ENCODE measurements at regions of chr19 and their contacts with region 1.

Region 1: DNA sequence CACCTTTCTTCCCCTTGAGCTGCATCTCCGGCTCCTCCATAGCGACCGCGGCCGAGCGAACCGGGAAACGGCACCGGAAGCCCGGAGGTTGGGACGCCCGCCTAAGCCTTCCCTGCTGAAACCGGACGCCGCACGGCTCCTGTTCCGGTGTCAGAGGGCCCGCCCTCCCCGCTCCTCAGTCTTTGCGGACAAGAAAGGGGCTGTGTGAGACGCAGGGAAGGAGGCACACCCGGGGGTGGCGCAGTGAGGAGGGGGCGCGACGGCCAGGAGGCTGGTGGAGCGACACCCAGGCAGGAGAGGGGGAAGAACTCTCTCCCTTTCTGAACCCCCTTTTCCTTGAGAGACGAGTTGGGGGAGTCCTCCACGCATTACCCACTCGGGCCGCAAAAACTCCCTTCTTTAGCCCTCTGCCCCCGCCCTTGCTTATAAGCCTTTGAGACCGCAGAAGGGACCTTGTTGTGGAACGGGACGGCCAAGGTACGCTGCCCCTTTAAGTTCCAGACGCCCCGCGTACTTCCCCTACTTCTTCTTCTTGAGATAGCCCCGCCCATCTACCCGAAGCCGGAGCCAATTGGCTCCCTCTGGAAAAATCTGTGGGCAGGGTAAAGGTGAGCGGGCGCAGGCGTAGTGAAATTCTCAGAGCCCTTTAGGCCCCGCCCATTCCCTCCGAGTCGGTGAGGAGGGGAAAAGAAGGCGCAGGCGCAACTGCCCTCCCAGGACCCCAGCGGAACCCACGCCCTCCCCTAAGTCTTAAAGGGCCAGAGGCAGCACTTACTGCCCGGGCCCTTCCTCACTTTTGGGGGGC is at the starts of genes BORCS8 and RFXANK:
- DNase-seq: peak; percentile 97 to 100 (median 98)

Region 2: GRCh38 chr19:18785179-18786128 is 406.8 kb before region 1 on chr19:
- intact Hi-C with region 1: no loop called
- DNase-seq: peak in 2 of 10 donors; percentile 13 to 52

Region 3: DNA sequence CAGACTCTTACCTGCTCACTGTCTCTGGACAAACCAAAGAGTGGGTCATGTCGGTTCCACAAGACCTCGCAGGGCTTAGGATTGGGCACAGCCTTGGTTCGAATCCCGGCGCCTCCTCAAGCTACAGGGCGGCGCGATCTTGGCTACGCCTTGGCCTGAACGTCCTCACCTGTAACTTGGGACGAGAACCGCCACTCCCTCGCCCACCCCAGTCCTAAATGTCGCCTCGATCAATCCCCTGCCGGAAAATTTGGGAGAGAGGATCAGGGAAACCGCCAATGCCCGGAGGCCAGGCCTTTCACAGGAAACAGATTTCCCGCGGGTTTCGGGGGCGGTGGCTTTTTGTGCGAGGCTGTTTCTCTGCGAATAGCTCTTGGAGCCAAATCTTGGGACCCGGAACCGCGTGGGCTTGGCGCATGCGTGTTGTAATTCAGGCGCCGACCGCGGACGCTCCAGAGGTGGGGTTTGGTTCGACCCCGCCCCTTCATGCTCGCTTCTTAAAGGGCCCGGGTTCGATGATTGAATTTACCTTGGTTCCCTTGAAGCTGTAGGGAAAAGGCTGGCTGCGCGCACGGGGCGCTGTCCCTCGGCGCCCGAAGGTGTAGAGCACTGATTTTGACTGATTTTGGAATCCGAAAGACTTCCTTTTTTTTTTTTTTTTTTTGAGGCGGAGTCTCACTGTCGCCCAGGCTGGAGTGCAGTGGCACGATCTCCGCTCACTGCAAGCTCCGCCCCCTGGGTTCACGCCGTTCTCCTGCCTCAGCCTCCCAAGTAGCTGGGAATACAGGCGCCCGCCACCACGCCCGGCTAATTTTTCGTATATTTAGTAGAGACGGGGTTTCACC is 11.0 kb after region 1 on chr19 and contains the start of gene NR2C2AP:
- intact Hi-C with region 1: loop called (anchors 1 kb)
- DNase-seq: peak; percentile 85 to 99 (median 92)